ENCODE measurements at regions of chr6 and their contacts with region 1.

Region 1: DNA sequence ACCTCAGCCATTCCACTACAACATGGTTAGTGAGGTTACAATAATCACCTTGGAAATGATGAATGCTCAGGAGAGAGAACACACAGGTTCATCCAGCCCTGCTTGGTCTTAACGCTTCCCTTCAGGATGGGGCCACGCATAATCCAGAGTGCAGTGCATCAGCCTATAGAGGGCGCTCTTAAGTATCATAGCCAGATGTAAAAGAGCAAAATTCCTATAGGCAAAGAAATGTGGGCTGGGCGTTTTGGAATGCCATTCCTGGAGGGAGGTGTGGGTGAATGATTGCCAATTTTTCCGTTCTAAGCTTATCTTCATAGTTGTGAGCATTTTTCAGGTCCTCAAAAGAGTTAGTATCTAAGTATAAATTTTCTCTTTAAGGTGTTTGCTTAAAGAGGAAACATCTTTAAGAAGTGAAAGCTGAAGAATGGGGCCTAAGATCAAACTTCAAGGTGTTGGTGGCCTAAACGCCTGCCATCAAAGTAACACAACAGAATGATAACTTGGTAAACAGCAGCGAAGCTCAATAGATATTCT is 1.8 kb downstream of the RIPOR2 start:
- DNase-seq: peak; percentile 61
- H3K4me3 Mint-ChIP-seq: peak overlapping the region; percentile 99
- H3K27ac Mint-ChIP-seq: peak overlapping the region; percentile 98
- H3K4me1 Mint-ChIP-seq: peaks cover 63% of the 10 kb centered on the region
- H3K27me3 Mint-ChIP-seq: no peaks in the 10 kb centered on the region

Region 2: DNA sequence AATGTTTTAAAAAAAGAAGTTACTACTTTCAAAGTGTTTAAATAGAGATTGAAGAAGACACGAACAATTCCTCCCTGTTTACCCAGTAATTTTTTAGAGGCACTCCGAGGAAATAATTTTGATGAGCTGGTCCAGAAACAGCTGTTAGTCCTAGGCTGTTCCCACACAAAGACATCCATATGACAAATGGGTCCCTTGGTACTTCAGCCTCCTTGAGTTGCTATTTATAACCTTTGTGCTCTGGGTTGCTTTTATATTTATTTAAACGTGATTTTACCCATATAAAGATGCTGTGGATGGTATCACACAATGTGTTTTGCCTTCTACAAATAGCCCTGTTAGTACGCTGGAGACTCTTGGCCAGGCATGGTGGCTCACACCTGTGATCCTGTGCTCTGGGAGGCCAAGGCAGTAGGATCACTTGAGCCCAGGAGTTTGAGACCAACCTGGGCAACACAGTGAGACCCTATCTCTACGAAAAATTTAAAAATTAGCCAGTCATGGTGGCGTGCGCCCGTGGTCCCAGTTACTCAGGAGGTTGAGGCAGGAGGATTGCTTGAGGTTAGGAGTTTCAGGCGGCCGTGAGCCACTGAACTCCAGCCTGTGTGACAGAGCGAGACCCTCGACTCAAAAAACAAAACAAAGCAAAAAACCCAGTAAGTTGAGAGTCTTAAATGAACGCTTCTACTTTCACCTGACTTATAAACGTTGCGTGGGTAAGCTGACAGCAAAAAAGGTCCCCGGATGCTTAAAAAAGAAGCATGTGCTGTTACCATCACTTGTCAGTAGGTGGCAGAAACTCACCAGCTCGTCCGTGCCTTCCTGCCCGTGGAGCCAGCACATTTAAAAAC is 78.3 kb before region 1 on chr6:
- CTCF ChIA-PET with region 1: interaction called, 45 read pairs
- POLR2A ChIA-PET with region 1: interaction called, 83 read pairs
- DNase-seq: peak; percentile 75
- H3K4me3 Mint-ChIP-seq: no peak overlapping the region
- H3K27ac Mint-ChIP-seq: peak overlapping the region; percentile 90
- H3K4me1 Mint-ChIP-seq: peaks cover 55% of the 10 kb centered on the region
- H3K27me3 Mint-ChIP-seq: no peaks in the 10 kb centered on the region

Region 3: GRCh38 chr6:24910961-24911712 is 22.8 kb before region 1 on chr6:
- CTCF ChIA-PET with region 1: interaction called, 42 read pairs
- POLR2A ChIA-PET with region 1: interaction called, 104 read pairs
- DNase-seq: peak; percentile 46
- H3K4me3 Mint-ChIP-seq: peak overlapping the region; percentile 76
- H3K27ac Mint-ChIP-seq: peak overlapping the region; percentile 79
- H3K4me1 Mint-ChIP-seq: peaks cover 90% of the 10 kb centered on the region
- H3K27me3 Mint-ChIP-seq: no peaks in the 10 kb centered on the region

Region 4: GRCh38 chr6:24968786-24969185 is 34.9 kb after region 1 on chr6:
- CTCF ChIA-PET with region 1: interaction called, 24 read pairs
- POLR2A ChIA-PET with region 1: interaction called, 141 read pairs
- DNase-seq: no peak
- H3K4me3 Mint-ChIP-seq: no peak overlapping the region
- H3K27ac Mint-ChIP-seq: no peak overlapping the region
- H3K4me1 Mint-ChIP-seq: peaks cover 36% of the 10 kb centered on the region
- H3K27me3 Mint-ChIP-seq: no peaks in the 10 kb centered on the region

Region 5: GRCh38 chr6:24991810-24992467 is 58.0 kb after region 1 on chr6:
- CTCF ChIA-PET with region 1: interaction called, 194 read pairs
- POLR2A ChIA-PET with region 1: interaction called, 185 read pairs
- DNase-seq: peak; percentile 81
- H3K4me3 Mint-ChIP-seq: no peak overlapping the region
- H3K27ac Mint-ChIP-seq: peak overlapping the region; percentile 67
- H3K4me1 Mint-ChIP-seq: peaks cover 44% of the 10 kb centered on the region
- H3K27me3 Mint-ChIP-seq: no peaks in the 10 kb centered on the region

Region 6: DNA sequence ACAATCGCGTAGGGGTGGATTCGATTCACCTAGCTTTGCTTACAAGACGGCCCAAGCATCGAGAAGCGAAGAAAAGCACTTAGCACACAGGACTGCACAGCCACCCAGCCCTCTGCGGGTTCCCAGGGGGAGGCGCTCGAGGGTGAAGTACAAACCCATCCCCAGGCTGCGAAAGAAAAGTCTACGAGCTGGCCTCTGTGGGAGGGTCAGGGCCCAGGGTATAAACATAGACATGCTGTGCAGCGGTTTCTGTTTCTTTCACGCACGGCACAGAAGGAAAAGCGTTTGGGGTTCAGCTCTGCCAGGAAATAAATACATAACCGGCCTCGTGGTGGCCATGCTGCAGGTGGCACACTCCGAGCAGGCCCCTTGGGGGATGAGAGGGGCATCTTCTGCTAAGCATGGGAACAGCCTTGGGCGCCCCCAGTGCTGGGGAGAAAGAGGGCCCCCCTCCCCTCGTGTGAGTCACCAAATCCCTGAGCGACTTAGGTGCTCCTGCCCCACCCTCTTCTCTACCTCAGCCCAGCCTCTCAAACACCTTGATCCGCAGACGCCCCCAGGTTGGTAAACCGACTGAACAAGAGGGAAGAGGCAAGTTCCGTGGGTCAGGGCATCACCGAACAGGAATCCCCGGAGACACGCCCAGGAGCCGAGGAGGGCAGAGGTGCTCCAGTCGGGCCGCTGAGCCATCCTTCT is 93.4 kb after region 1 on chr6:
- CTCF ChIA-PET with region 1: interaction called, 55 read pairs
- POLR2A ChIA-PET with region 1: interaction called, 44 read pairs
- DNase-seq: peak; percentile 89
- H3K4me3 Mint-ChIP-seq: peak overlapping the region; percentile 67
- H3K27ac Mint-ChIP-seq: peak overlapping the region; percentile 81
- H3K4me1 Mint-ChIP-seq: peaks cover 57% of the 10 kb centered on the region
- H3K27me3 Mint-ChIP-seq: no peaks in the 10 kb centered on the region

Region 7: DNA sequence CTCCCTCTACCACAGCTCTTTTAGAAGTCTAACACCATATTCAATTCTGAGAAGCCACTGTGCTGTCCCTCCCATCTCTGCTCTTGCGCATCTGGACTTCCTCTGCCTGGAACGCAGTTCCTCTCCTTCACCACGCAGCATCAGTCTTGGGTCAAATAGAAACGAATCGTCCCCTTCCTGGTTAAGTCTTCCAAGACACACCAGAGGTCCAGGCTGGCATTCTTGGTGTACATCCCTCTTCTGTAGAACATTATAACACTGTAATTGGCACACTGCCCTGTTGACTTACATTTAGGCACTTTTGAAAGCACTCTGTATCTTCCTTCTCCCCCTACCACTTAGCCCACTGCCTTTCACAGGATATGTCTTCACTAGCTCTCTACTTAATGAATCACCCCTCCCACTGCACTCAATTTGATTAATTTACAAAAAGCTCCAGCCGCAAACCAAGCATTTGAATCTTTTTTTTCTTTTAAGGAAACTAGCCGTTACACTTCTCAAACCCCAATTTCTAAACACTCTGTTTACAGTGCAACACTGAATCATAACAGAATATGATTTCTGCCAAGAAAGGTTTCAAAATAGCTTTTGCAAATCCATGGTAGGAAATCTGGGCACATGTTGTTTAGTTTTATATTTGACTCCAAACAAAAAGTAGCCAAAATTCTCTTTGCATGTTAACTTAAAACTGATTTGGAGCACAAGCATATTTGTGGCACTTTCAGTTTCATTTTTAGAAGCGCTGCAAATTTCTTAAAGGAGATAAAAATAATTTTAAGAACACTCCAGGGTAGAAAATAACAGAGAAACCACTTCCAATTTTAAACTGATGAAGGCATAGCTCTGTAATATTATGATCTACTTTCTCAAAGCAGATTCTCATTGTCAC is 204.5 kb after region 1 on chr6:
- CTCF ChIA-PET with region 1: no interaction called
- POLR2A ChIA-PET with region 1: interaction called, 23 read pairs
- DNase-seq: peak; percentile 81
- H3K4me3 Mint-ChIP-seq: peak overlapping the region; percentile 83
- H3K27ac Mint-ChIP-seq: peak overlapping the region; percentile 96
- H3K4me1 Mint-ChIP-seq: peaks cover 38% of the 10 kb centered on the region
- H3K27me3 Mint-ChIP-seq: no peaks in the 10 kb centered on the region